ENCODE measurements at regions of chr5 and their contacts with region 1.

Region 1: DNA sequence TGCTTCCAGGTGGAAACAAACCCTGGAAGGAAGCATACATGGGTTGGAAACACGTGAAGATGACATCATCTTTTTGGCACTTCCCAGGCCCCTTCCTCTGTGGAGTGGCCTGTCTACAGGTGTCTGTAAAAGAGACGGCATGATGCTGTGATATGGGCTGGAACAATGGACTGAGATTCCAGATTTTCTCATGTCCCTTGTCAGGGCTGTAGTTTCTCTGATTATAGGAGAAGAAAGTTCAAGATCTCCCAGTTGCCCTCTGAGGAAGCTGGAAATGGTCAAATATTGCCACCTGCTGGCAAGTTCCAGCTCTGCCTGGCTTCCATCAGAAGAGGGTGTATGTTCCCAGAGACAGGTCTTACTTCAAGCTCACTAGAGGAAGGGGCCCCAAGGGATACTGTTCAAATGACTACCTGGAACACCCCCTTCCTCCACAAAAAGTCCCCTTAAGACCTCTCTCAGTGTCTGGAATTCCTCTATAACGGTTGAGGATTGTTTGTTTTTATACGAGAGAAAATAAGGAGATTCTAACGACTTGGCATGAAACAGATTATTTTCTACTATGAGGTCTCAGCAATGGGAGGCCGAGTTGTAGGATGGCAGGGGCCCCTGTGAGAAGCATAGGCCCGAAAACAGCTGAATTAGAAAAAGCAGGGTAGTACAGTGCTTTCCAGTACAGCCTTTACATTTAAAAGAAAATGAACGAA is 7.3 kb upstream of the ANXA6 start:
- DNase-seq: no peak
- H3K4me3 ChIP-seq: no peak overlapping the region
- H3K27ac ChIP-seq: no peak overlapping the region
- H3K4me1 ChIP-seq: peaks cover 15 to 41% (median 32%) of the 10 kb centered on the region in 4 donors
- H3K27me3 ChIP-seq: no peaks in the 10 kb centered on the region
- CTCF ChIP-seq: peak; percentile 94 to 95 (median 95)
- EP300 ChIP-seq: no peak
- POLR2A ChIP-seq: no peak

Region 2: GRCh38 chr5:151126199-151126645 is 38.6 kb before region 1 on chr5:
- intact Hi-C with region 1: loop called (anchors 2 kb)
- DNase-seq: no peak
- H3K4me3 ChIP-seq: no peak overlapping the region
- H3K27ac ChIP-seq: peak overlapping the region in 1 of 4 donors; percentile 1
- H3K4me1 ChIP-seq: peaks cover 21 to 60% (median 55%) of the 10 kb centered on the region in 4 donors
- H3K27me3 ChIP-seq: no peaks in the 10 kb centered on the region
- CTCF ChIP-seq: peak; percentile 67 to 86 (median 80)
- EP300 ChIP-seq: no peak
- POLR2A ChIP-seq: no peak

Region 3: GRCh38 chr5:151213800-151214613 is 49.2 kb after region 1 on chr5:
- intact Hi-C with region 1: no loop called
- DNase-seq: no peak
- H3K4me3 ChIP-seq: peak overlapping the region in 2 of 4 donors; percentile 13 to 25
- H3K27ac ChIP-seq: peak overlapping the region; percentile 91 to 97 (median 96)
- H3K4me1 ChIP-seq: peaks cover 95 to 100% (median 99%) of the 10 kb centered on the region in 4 donors
- H3K27me3 ChIP-seq: no peaks in the 10 kb centered on the region
- CTCF ChIP-seq: no peak
- EP300 ChIP-seq: no peak
- POLR2A ChIP-seq: no peak

Region 4: DNA sequence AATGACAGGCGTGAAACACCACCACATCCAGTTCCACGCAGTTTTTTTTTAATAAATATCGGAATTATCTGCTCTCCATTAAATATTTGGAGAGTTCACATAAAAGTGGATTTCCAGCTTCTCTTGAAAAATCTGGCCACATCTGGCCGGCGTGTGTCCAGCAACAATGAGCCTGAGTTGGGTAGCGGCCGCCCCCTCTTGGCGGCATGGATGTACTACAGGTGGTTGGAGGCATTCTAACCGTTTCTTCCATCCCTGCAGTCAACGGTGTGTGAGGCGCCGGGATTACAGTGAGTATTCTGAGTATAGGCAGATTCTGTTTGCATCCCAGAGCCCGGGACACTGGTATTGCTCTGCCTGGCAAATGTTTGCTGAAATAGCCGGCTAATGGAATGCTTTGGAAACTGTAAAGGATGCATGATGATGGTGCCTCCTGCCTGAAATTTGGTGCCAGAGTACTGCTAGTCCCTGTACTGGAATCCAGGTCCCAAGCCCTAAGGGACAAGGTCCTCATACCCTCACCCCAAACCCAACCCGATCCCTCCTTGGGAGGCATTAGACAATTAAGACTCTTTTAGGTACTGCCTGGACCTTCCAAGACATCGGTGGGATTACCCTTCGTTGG is 74.5 kb after region 1 on chr5:
- intact Hi-C with region 1: loop called (anchors 5 kb)
- DNase-seq: no peak
- H3K4me3 ChIP-seq: peak overlapping the region; percentile 41 to 48 (median 44)
- H3K27ac ChIP-seq: peak overlapping the region; percentile 81 to 85 (median 83)
- H3K4me1 ChIP-seq: peaks cover 19 to 41% (median 37%) of the 10 kb centered on the region in 4 donors
- H3K27me3 ChIP-seq: no peaks in the 10 kb centered on the region
- CTCF ChIP-seq: peak; percentile 61 to 81 (median 77)
- EP300 ChIP-seq: no peak
- POLR2A ChIP-seq: no peak

Measured in esophagus muscularis mucosa (tissue), 4 donors.